H1 (cell line): ENCODE measurements at regions of chr10 and their contacts with region 1.

Region 1: GRCh38 chr10:127813290-127813689 is 76.3 kb downstream of the FOXI2 start:
- DNase-seq: no peak
- H3K4me3 ChIP-seq: no peak overlapping the region
- H3K27ac ChIP-seq: no peak overlapping the region
- H3K4me1 ChIP-seq: no peaks in the 10 kb centered on the region
- H3K27me3 ChIP-seq: no peaks in the 10 kb centered on the region; a peak in 1 of 7 replicates
- CTCF ChIP-seq: peak in 2 of 3 experiments; percentile 54 to 59; a peak in 3 of 4 replicates
- EP300 ChIP-seq: no peak
- POLR2A ChIP-seq: no peak
- RAD21 ChIP-seq: peak; percentile 81 to 85

Region 2: GRCh38 chr10:127649642-127650041 is 163.6 kb before region 1 on chr10:
- CTCF ChIA-PET with region 1: interaction called, 16 read pairs
- POLR2A ChIA-PET with region 1: no interaction called
- DNase-seq: peak; percentile 21 to 74
- H3K4me3 ChIP-seq: no peak overlapping the region
- H3K27ac ChIP-seq: no peak overlapping the region
- H3K4me1 ChIP-seq: no peaks in the 10 kb centered on the region
- H3K27me3 ChIP-seq: no peaks in the 10 kb centered on the region
- CTCF ChIP-seq: peak; percentile 47 to 74 (median 72)
- EP300 ChIP-seq: no peak
- POLR2A ChIP-seq: no peak
- RAD21 ChIP-seq: peak; percentile 68 to 79

Region 3: GRCh38 chr10:127715782-127716378 is 97.4 kb before region 1 on chr10:
- CTCF ChIA-PET with region 1: interaction called, 103 read pairs
- POLR2A ChIA-PET with region 1: no interaction called
- DNase-seq: no peak
- H3K4me3 ChIP-seq: no peak overlapping the region
- H3K27ac ChIP-seq: no peak overlapping the region
- H3K4me1 ChIP-seq: no peaks in the 10 kb centered on the region
- H3K27me3 ChIP-seq: no peaks in the 10 kb centered on the region
- CTCF ChIP-seq: peak in 2 of 3 experiments; percentile 35 to 41; a peak in 2 of 4 replicates
- EP300 ChIP-seq: no peak
- POLR2A ChIP-seq: no peak
- RAD21 ChIP-seq: peak; percentile 71 to 76

Region 4: DNA sequence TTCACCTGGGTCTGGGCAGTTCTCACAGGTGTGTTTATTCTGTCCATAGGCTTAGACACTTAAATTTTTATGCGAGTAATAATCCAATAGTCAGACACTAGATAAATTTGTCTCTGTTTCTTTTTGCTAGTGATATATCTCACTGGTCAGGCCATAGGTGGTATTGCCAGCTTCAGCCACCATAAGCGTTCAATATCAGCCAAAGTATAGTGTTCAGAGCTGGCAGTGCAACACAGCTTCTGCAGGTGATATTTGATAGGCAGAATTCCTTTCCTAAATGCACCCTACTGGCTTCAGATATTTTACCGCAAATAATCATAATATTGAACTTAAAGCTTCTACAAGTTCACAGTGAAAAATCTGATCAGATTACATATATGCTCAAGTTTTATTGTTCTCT is 41.9 kb before region 1 on chr10:
- CTCF ChIA-PET with region 1: interaction called, 11 read pairs
- POLR2A ChIA-PET with region 1: no interaction called
- DNase-seq: no peak
- H3K4me3 ChIP-seq: no peak overlapping the region
- H3K27ac ChIP-seq: no peak overlapping the region
- H3K4me1 ChIP-seq: no peaks in the 10 kb centered on the region
- H3K27me3 ChIP-seq: no peaks in the 10 kb centered on the region
- CTCF ChIP-seq: no peak
- EP300 ChIP-seq: no peak
- POLR2A ChIP-seq: no peak
- RAD21 ChIP-seq: no peak

Region 5: DNA sequence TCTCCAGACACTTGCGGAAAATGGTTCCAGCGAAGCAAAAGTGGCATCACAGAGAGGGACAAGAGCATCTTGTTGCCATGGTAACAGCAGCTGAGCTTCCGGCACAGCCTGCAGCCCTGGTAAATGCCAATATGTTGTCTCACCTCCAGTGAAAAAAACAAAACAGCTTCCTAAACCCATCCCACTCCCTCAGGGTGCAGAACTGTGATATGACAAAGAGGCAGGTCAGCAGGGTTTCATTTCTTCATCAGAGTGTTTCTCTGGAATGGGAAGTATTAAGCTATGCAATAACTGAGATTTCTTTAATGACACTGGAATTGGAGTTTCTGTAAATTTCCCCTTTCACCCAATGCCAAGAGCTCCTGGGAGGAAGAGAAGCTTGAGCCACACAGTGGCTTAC is 10.7 kb before region 1 on chr10:
- CTCF ChIA-PET with region 1: interaction called, 18 read pairs
- POLR2A ChIA-PET with region 1: no interaction called
- DNase-seq: no peak
- H3K4me3 ChIP-seq: no peak overlapping the region
- H3K27ac ChIP-seq: no peak overlapping the region
- H3K4me1 ChIP-seq: no peaks in the 10 kb centered on the region
- H3K27me3 ChIP-seq: no peaks in the 10 kb centered on the region
- CTCF ChIP-seq: no peak
- EP300 ChIP-seq: no peak
- POLR2A ChIP-seq: no peak
- RAD21 ChIP-seq: no peak

Region 6: GRCh38 chr10:127853868-127854768 is 40.8 kb after region 1 on chr10:
- CTCF ChIA-PET with region 1: interaction called, 35 read pairs
- POLR2A ChIA-PET with region 1: no interaction called
- DNase-seq: peak; percentile 51 to 85
- H3K4me3 ChIP-seq: no peak overlapping the region
- H3K27ac ChIP-seq: no peak overlapping the region
- H3K4me1 ChIP-seq: peaks cover 0 to 5% (median 2%) of the 10 kb centered on the region in 4 experiments; a peak in 4 of 7 replicates
- H3K27me3 ChIP-seq: no peaks in the 10 kb centered on the region
- CTCF ChIP-seq: peak; percentile 77 to 93 (median 88)
- EP300 ChIP-seq: no peak
- POLR2A ChIP-seq: no peak
- RAD21 ChIP-seq: peak; percentile 99

Region 7: GRCh38 chr10:127945335-127945734 is 132.0 kb after region 1 on chr10:
- CTCF ChIA-PET with region 1: no interaction called
- POLR2A ChIA-PET with region 1: no interaction called
- DNase-seq: no peak
- H3K4me3 ChIP-seq: no peak overlapping the region
- H3K27ac ChIP-seq: no peak overlapping the region
- H3K4me1 ChIP-seq: no peaks in the 10 kb centered on the region
- H3K27me3 ChIP-seq: no peaks in the 10 kb centered on the region; a peak in 1 of 7 replicates
- CTCF ChIP-seq: no peak
- EP300 ChIP-seq: no peak
- POLR2A ChIP-seq: no peak
- RAD21 ChIP-seq: no peak